Right lobe of liver (tissue), 6 donors: ENCODE measurements at regions of chr2 and their contacts with region 1.

Region 1: DNA sequence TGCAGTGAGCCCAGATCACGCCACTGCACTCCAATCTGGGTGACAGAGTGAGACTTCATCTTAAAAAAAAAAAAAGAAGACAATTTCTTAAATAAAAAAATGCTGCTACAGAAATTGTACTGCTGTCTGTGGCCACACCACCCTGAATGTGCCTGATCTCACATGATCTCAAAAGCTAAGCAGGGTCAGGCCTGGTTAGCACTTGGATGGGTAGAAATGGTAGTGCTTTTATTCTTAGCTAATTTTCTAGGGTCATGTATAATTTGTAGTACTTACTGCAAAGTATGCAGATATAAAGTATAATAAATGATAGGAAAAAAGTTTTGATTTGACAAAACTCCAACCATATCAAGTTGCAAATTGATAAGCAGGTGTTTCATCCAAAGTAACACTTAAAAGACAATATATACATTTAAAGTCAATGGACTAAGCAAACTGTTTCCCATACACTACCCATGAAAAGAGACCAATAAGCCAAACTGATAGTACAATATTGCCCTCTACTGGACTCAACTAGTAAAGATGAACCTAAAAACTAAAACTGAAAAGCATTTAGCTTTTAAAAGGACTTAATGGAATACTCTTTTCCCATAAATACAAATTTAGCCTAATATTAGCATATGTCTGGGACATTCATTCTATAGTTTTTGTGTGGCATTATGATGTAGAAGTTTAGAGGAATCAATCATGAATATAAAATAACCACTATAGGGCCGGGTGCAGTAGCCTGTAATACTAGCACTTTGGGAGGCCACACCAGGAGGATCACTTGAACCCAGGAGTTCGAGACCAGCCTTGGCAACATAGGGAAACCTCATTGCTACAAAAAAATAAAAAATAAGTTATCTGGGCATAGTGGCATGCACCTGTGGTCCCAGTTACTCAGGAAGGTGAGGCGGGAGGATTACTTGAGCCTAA is 18.6 kb upstream of the PEX13 start:
- DNase-seq: no peak
- ATAC-seq: peak; percentile 67 to 80 (median 72)
- H3K4me3 ChIP-seq: no peak overlapping the region
- H3K27ac ChIP-seq: no peak overlapping the region
- H3K4me1 ChIP-seq: peaks cover 0 to 5% (median 0%) of the 10 kb centered on the region in 4 donors
- H3K27me3 ChIP-seq: no peaks in the 10 kb centered on the region
- CTCF ChIP-seq: peak; percentile 58 to 67 (median 62)
- POLR2A ChIP-seq: no peak

Region 2: DNA sequence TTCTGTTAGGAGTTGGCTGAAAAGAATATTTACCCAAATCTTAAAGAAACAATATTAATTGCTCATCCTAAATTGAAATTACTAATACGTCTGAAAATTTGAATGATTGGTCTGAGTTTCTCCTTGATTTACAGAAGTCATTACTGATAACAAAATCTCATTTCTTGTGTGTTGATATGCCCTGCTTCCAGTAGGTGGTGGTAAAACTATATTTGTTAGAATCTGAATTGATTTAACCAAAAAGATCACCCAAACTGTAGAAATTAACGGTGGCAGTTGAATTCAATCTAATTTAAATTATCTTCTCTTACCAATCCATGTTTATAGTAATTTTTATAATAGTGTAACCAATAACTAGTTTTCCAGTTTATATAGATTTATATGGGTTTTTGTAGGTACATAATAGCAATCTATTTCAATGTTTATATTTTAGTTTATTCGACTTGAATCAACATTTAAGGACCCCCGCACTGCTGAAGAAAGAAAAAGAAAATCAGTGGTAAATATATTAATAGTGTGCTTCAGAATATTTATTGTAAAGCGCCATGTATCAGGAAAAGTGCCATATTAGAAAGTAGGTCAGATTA is 204.5 kb before region 1 on chr2:
- intact Hi-C with region 1: loop called in 1 of 2 experiments (anchors 10 kb)
- DNase-seq: no peak
- ATAC-seq: peak in 3 of 4 donors; percentile 50 to 58 (median 56)
- H3K4me3 ChIP-seq: no peak overlapping the region
- H3K27ac ChIP-seq: no peak overlapping the region
- H3K4me1 ChIP-seq: peaks cover 0 to 7% (median 0%) of the 10 kb centered on the region in 4 donors
- H3K27me3 ChIP-seq: no peaks in the 10 kb centered on the region
- CTCF ChIP-seq: peak; percentile 42 to 55 (median 50)
- POLR2A ChIP-seq: no peak